ENCODE measurements at regions of chr6 and their contacts with region 1.

Region 1: GRCh38 chr6:164106345-164106769 is 691.8 kb downstream of the QKI start:
- DNase-seq: peak; percentile 50 to 73
- ATAC-seq: peak in 1 of 4 donors; percentile 15
- H3K4me3 ChIP-seq: no peak overlapping the region
- H3K27ac ChIP-seq: peak overlapping the region; percentile 99
- H3K4me1 ChIP-seq: peaks cover 39% of the 10 kb centered on the region
- H3K27me3 ChIP-seq: no peaks in the 10 kb centered on the region
- CTCF ChIP-seq: peak; percentile 33

Region 2: DNA sequence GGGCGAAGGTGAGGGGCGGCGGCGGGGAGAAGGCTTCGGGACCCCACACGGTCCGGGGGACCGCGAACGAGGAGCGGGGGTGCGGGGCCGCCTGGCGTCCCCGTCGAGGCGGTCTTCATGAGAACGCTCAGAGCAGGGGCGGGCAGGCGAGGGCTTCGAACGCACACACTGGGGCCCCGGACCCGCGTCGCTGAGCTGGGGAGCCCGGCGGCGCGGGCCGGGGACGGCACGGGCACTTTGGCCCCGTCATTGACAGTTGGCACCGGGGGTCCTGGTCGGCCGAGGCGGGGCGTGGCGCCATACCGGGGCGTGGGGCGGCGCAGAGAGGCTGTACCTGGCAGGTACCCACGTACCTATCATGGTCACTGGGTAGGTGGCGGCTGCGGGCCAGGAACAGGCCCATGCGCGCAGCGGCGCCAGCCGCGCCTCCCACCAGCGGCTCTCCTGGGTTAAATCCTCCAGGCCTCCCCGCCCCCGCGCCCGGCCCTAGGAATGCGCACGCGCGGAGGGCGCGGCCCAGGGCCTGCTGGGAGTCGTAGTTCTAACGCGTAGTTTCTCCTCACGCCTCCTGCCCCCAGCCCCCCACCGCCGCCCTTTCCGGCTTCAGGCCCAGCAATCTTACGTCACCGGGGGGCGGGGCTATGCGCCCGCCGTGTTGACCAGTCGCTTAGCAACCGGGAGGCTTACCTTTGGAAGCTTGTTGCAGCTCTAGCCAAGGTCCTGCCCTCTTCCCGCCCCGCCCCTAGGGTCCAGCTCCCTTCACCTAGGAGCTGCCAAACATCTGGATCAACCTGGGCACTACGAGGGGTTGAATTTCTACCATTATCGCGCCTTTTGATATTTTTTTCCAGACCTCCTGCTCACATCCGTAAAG is 1378.8 kb before region 1 on chr6 and contains the starts of genes PACRG and PRKN:
- intact Hi-C with region 1: loop called in 1 of 2 experiments (anchors 10 kb)
- DNase-seq: peak; percentile 98 to 99
- ATAC-seq: peak; percentile 99 to 100 (median 99)
- H3K4me3 ChIP-seq: peak within 1 kb of the TSS; percentile 90
- H3K27ac ChIP-seq: peak within 1 kb of the TSS; percentile 93
- H3K4me1 ChIP-seq: peaks cover 8% of the 10 kb centered on the region
- H3K27me3 ChIP-seq: no peaks in the 10 kb centered on the region
- CTCF ChIP-seq: no peak
- total RNA-seq, gene PACRG: 1.1 to 3.1 (median 1.8) TPM
- total RNA-seq, gene PRKN: 11.3 to 19.5 (median 15.2) TPM

Region 3: GRCh38 chr6:163338671-163339405 is 767.5 kb before region 1 on chr6:
- intact Hi-C with region 1: loop called in 1 of 2 experiments (anchors 2 kb)
- DNase-seq: peak; percentile 56 to 78
- ATAC-seq: peak; percentile 79 to 83 (median 80)
- H3K4me3 ChIP-seq: peak overlapping the region; percentile 50
- H3K27ac ChIP-seq: peak overlapping the region; percentile 94
- H3K4me1 ChIP-seq: peaks cover 72% of the 10 kb centered on the region
- H3K27me3 ChIP-seq: no peaks in the 10 kb centered on the region
- CTCF ChIP-seq: no peak

Region 4: GRCh38 chr6:163419413-163420288 is 686.7 kb before region 1 on chr6:
- intact Hi-C with region 1: loop called (anchors 1 to 5 kb)
- DNase-seq: no peak
- ATAC-seq: peak; percentile 16 to 41 (median 28)
- H3K4me3 ChIP-seq: peak overlapping the region; percentile 93
- H3K27ac ChIP-seq: peak overlapping the region; percentile 99
- H3K4me1 ChIP-seq: peaks cover 57% of the 10 kb centered on the region
- H3K27me3 ChIP-seq: no peaks in the 10 kb centered on the region
- CTCF ChIP-seq: no peak

Region 5: DNA sequence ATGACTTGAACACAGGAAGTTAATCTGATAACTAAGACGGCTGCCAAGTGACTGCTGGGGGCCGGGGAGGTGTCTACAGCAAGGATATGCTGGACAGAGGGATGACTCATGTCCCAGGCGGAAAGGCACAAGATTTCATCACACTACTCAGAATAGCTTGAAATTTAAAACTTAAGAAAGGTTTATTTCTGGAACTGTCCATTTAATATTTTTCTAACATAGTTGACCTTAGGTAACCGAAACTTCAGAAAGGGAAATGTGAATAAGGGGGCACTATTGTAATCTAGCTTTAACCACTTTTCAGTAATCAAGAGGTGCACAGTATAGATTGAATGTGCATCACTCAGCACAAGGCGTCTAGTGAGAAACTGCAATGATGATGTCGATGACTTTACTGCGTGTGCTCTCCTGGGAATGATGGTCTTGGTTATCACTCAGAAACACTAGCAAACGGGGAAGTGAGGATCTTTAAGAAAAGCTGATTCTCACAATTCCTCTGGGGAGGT is 520.4 kb before region 1 on chr6:
- intact Hi-C with region 1: loop called (anchors 2 to 5 kb)
- DNase-seq: peak; percentile 65 to 86
- ATAC-seq: peak; percentile 81 to 85 (median 84)
- H3K4me3 ChIP-seq: peak overlapping the region; percentile 17
- H3K27ac ChIP-seq: peak overlapping the region; percentile 83
- H3K4me1 ChIP-seq: peaks cover 39% of the 10 kb centered on the region
- H3K27me3 ChIP-seq: no peaks in the 10 kb centered on the region
- CTCF ChIP-seq: no peak

Region 6: DNA sequence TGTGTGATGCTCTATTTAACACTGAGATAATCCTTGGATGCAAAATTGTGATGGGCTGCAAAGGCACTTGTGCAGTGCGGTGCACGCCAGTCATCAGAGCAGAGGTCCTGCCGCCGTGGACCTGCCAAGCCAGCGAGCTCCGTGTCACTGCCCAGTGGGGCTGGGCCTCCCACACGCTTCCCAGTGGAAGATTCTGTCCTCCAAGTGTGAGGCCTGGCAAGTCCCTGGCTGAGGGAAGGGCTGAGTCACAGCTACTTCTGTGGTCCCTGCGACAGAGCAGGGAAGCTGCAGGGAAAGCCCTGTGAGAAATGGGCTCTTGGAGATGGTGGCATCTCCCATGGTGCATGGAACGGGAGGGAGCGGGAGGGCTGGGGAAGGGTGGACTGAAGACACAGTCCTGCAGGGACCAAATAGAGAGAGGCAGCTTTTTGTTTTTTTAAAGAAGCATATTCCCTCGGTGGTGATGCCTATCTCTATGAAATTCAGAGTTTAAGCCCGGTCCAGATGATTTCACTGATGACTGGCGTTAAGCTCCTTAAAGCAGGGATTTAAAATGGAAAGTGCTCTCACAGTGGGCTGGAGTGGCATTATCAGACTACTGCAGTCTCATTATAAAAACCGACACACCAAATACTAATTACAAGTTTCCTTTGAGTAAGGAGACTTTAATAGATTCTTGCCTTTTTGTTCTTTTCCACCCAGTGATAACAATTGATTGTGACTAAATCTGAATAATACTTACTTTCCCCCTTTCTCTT is 278.1 kb before region 1 on chr6:
- intact Hi-C with region 1: loop called in 1 of 2 experiments (anchors 10 kb)
- DNase-seq: peak; percentile 61 to 72
- ATAC-seq: peak; percentile 73 to 92 (median 81)
- H3K4me3 ChIP-seq: no peak overlapping the region
- H3K27ac ChIP-seq: peak overlapping the region; percentile 25
- H3K4me1 ChIP-seq: peaks cover 23% of the 10 kb centered on the region
- H3K27me3 ChIP-seq: no peaks in the 10 kb centered on the region
- CTCF ChIP-seq: no peak

Region 7: DNA sequence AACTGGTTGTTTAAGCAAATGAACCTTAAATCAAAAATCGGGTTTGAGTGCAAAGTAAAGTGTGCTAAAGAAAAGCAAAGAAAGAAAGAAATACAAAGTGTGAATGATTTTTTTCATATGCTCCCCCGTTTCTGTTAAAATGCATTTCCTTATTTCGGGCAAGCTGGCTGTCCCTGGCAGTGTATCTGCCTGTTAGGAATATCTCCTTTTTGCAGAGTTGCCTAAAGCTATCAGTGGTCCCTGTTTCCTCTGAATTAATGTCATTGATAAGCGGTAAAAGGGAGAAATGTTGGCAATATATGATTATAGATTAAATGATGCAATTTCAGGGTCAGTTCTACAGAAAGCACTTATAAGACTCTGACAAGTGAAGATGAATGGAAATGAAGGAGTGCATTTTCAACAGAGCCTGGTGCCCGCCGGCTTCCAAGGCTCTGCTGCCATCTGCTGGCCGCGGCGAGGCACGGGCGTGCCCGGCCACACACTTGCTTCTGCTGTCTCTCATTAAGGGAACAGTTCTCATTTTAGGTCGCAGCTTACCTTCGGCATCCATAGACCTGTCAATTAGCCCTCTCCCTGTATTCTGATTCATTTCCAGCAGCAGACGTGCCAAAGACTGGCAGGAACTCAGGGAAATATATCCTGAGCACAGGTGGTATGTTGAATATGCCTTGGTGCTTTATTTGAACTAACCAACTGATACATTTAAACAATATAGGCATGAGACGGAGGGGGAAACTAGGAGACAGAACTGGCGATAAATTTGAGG is 821.1 kb after region 1 on chr6:
- intact Hi-C with region 1: loop called (anchors 10 kb)
- DNase-seq: peak; percentile 57 to 84
- ATAC-seq: peak; percentile 90 to 99 (median 96)
- H3K4me3 ChIP-seq: peak overlapping the region; percentile 52
- H3K27ac ChIP-seq: no peak overlapping the region
- H3K4me1 ChIP-seq: peaks cover 6% of the 10 kb centered on the region
- H3K27me3 ChIP-seq: no peaks in the 10 kb centered on the region
- CTCF ChIP-seq: peak; percentile 99